Activated CD4-positive, alpha-beta T cell treated with anti-CD3 and anti-CD28 coated beads, Interleukin-2, amount 10 ng/mL, durations not matched to agents 24 days and 14 days (primary cell): ENCODE measurements at regions of chr3 and their contacts with region 1.

Region 1: GRCh38 chr3:40452876-40453730 is 4.0 kb upstream of the RPL14 start:
- DNase-seq: peak; percentile 98
- H3K4me3 Mint-ChIP-seq: peak overlapping the region; percentile 93
- H3K27ac Mint-ChIP-seq: peak overlapping the region; percentile 97
- H3K4me1 Mint-ChIP-seq: peaks cover 24% of the 10 kb centered on the region
- H3K27me3 Mint-ChIP-seq: peaks cover 2% of the 10 kb centered on the region

Region 2: GRCh38 chr3:39406368-39407258 is 1046.5 kb before region 1 on chr3 and contains the start of gene RPSA:
- intact Hi-C with region 1: loop called (anchors 5 kb)
- DNase-seq: peak; percentile 99
- H3K4me3 Mint-ChIP-seq: peak within 1 kb of the TSS; percentile 92
- H3K27ac Mint-ChIP-seq: peak within 1 kb of the TSS; percentile 99
- H3K4me1 Mint-ChIP-seq: peaks cover 40% of the 10 kb centered on the region
- H3K27me3 Mint-ChIP-seq: peaks cover 2% of the 10 kb centered on the region
- total RNA-seq, gene RPSA: 1,932 and 1,935 TPM in 2 replicates

Region 3: DNA sequence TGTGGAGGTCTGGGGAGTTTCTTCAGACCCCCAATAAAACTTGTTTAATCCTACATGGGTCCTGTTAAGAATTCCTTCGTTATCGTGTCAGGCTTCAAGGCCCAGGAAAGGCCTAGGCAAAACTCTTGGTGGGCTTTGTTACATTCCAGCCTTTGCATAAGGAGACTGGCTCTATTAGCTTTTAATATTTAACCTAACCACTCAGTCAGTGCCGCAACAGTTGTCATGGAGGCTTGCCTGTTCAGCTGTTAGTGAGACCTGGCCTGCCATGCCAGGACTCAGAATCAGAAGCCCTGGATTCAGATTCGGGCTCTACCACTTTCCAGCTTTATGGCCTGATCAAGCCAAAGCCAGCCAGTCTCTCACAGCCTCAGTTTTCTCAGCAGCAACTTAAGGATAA is 124.0 kb before region 1 on chr3:
- intact Hi-C with region 1: loop called (anchors 5 kb)
- DNase-seq: no peak
- H3K4me3 Mint-ChIP-seq: no peak overlapping the region
- H3K27ac Mint-ChIP-seq: no peak overlapping the region
- H3K4me1 Mint-ChIP-seq: peaks cover 3% of the 10 kb centered on the region
- H3K27me3 Mint-ChIP-seq: peaks cover 24% of the 10 kb centered on the region

Region 4: GRCh38 chr3:40505599-40506462 is 52.7 kb after region 1 on chr3 and contains the start of gene ZNF620:
- intact Hi-C with region 1: loop called (anchors 2 kb)
- DNase-seq: peak; percentile 82
- H3K4me3 Mint-ChIP-seq: peak within 1 kb of the TSS; percentile 94
- H3K27ac Mint-ChIP-seq: peak within 1 kb of the TSS; percentile 82
- H3K4me1 Mint-ChIP-seq: peaks cover 17% of the 10 kb centered on the region
- H3K27me3 Mint-ChIP-seq: peaks cover 2% of the 10 kb centered on the region
- total RNA-seq, gene ZNF620: 4.9 and 5.6 TPM in 2 replicates

Region 5: DNA sequence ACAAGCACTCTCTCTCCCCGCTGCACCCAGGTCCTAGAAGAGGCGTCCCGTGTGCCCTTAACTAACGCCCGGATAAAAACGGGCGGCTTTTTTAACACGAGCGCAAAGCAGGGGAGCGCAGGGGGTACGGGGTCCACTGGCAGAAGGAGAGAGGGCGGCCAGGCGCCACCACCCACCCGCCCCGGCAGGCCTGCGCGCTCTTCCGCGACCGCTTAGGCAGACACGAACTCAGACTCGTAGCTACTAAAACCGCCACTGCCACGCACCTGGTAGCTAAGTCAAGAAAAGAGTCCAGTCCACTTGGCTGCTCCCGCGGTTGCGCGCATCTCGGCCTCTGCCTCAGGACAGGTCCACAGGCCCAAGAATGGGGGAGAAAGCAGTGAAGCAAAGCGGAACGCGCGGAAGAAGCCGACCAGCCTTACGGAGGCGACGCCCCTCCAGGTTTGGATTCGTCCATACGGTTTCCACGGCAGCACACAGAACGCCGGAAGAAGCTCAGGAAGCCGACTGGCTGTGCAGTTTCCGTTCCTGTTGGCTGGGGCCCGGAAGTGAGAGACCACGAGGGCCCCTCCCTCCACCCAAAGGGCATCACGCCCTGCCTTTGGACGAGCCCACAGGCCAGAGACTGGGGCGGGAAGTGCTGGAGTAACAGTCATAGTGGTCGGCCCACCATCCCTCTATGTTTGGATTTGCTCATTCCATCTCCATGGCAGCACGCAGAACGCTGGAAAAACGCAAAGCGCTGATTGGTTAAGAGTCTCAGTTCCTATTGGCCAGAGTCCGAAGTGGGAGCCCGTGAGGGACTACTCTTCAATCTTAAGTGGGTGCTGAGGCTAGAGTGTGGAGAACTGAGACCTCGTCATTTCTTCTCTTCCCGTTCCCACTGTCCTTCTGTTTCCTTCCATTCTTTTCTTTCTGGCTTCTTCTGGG is 1508.9 kb after region 1 on chr3 and contains the start of gene ULK4:
- intact Hi-C with region 1: loop called (anchors 2 kb)
- DNase-seq: peak; percentile 98
- H3K4me3 Mint-ChIP-seq: peak within 1 kb of the TSS; percentile 92
- H3K27ac Mint-ChIP-seq: peak within 1 kb of the TSS; percentile 94
- H3K4me1 Mint-ChIP-seq: peaks cover 9% of the 10 kb centered on the region
- H3K27me3 Mint-ChIP-seq: peaks cover 1% of the 10 kb centered on the region
- total RNA-seq, gene ULK4: 6.3 and 10.2 TPM in 2 replicates